Breast epithelium (tissue), 4 donors: ENCODE measurements at regions of chr3 and their contacts with region 1.

Region 1: GRCh38 chr3:33898901-33899300 is 100.5 kb downstream of the PDCD6IP start:
- DNase-seq: no peak
- H3K4me3 ChIP-seq: no peak overlapping the region
- H3K27ac ChIP-seq: no peak overlapping the region
- H3K4me1 ChIP-seq: no peaks in the 10 kb centered on the region
- H3K27me3 ChIP-seq: no peaks in the 10 kb centered on the region
- CTCF ChIP-seq: no peak
- POLR2A ChIP-seq: no peak

Region 2: GRCh38 chr3:33482111-33482521 is 416.8 kb before region 1 on chr3:
- intact Hi-C with region 1: no loop called
- DNase-seq: no peak
- H3K4me3 ChIP-seq: no peak overlapping the region
- H3K27ac ChIP-seq: no peak overlapping the region
- H3K4me1 ChIP-seq: no peaks in the 10 kb centered on the region
- H3K27me3 ChIP-seq: no peaks in the 10 kb centered on the region
- CTCF ChIP-seq: no peak
- POLR2A ChIP-seq: no peak

Region 3: GRCh38 chr3:33958661-33959060 is 59.8 kb after region 1 on chr3:
- intact Hi-C with region 1: loop called (anchors 2 kb)
- DNase-seq: no peak
- H3K4me3 ChIP-seq: no peak overlapping the region
- H3K27ac ChIP-seq: no peak overlapping the region
- H3K4me1 ChIP-seq: no peaks in the 10 kb centered on the region
- H3K27me3 ChIP-seq: no peaks in the 10 kb centered on the region
- CTCF ChIP-seq: no peak
- POLR2A ChIP-seq: no peak

Region 4: DNA sequence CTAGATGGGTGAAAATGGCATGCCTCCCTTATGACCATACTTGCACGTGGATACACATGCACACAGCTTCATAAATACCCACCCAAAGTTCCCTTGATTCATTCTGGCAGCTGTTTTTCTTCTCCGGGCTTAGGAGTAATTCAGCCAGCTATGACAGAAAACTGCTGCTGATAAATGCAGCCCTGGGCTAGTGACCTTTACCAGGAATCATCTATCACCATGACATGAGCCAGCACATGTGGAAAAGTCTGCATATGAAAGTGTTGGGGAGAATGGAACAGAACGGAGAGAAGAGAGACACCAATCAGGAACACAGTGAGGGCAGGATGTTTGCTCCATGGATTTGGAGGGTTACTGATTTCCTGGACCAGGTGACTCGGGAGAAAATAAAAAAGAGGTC is 605.9 kb after region 1 on chr3:
- intact Hi-C with region 1: no loop called
- DNase-seq: no peak
- H3K4me3 ChIP-seq: no peak overlapping the region
- H3K27ac ChIP-seq: no peak overlapping the region
- H3K4me1 ChIP-seq: no peaks in the 10 kb centered on the region
- H3K27me3 ChIP-seq: no peaks in the 10 kb centered on the region
- CTCF ChIP-seq: no peak
- POLR2A ChIP-seq: no peak